Naive thymus-derived CD8-positive, alpha-beta T cell (primary cell): ENCODE measurements at regions of chr13 and their contacts with region 1.

Region 1: GRCh38 chr13:51452361-51453206 is at the start of gene INTS6:
- DNase-seq: peak; percentile 97 to 100 (median 99)
- ATAC-seq: peak; percentile 76 to 84
- H3K4me3 Mint-ChIP-seq: peak within 1 kb of the TSS; percentile 84 to 99 (median 94)
- H3K27ac Mint-ChIP-seq: peak within 1 kb of the TSS; percentile 95 to 100 (median 98)
- H3K4me1 Mint-ChIP-seq: peaks cover 22 to 56% (median 54%) of the 10 kb centered on the region in 4 donors
- H3K27me3 Mint-ChIP-seq: peaks cover 0 to 2% (median 0%) of the 10 kb centered on the region in 5 donors
- polyA plus RNA-seq, gene INTS6: 20.9 to 25.1 (median 23.9) TPM

Region 2: GRCh38 chr13:51420681-51421490 is 31.7 kb before region 1 on chr13:
- POLR2A ChIA-PET with region 1: interaction called, 11 read pairs
- DNase-seq: peak in 2 of 10 donors; percentile 22 to 24
- ATAC-seq: peak; percentile 57 to 71
- H3K4me3 Mint-ChIP-seq: peak overlapping the region; percentile 30 to 74 (median 67)
- H3K27ac Mint-ChIP-seq: peak overlapping the region in 9 of 10 donors; percentile 13 to 90 (median 56)
- H3K4me1 Mint-ChIP-seq: peaks cover 32 to 87% (median 71%) of the 10 kb centered on the region in 4 donors
- H3K27me3 Mint-ChIP-seq: no peaks in the 10 kb centered on the region

Region 3: DNA sequence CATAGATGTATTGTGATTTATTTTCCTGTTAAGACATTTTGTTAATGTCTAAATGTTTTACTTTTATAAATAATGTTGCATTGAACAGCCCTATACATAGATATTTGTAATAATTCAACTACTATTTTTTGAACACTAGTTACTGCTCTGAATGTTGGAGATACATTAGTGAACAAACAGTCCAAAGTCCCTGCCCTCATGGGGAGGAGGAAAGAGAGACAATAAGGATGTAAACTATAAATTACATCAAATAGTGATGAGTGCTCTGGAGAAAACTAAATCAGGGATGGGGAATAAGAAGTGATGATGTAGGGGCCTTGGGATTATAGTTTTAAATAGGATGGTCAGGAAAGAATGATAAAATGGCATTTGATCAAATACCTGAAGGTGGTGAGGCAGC is 12.5 kb after region 1 on chr13:
- POLR2A ChIA-PET with region 1: interaction called, 16 read pairs
- DNase-seq: no peak
- ATAC-seq: no peak
- H3K4me3 Mint-ChIP-seq: no peak overlapping the region
- H3K27ac Mint-ChIP-seq: peak overlapping the region in 1 of 10 donors; percentile 3
- H3K4me1 Mint-ChIP-seq: peaks cover 0 to 2% (median 0%) of the 10 kb centered on the region in 4 donors
- H3K27me3 Mint-ChIP-seq: peaks cover 0 to 2% (median 0%) of the 10 kb centered on the region in 5 donors

Region 4: DNA sequence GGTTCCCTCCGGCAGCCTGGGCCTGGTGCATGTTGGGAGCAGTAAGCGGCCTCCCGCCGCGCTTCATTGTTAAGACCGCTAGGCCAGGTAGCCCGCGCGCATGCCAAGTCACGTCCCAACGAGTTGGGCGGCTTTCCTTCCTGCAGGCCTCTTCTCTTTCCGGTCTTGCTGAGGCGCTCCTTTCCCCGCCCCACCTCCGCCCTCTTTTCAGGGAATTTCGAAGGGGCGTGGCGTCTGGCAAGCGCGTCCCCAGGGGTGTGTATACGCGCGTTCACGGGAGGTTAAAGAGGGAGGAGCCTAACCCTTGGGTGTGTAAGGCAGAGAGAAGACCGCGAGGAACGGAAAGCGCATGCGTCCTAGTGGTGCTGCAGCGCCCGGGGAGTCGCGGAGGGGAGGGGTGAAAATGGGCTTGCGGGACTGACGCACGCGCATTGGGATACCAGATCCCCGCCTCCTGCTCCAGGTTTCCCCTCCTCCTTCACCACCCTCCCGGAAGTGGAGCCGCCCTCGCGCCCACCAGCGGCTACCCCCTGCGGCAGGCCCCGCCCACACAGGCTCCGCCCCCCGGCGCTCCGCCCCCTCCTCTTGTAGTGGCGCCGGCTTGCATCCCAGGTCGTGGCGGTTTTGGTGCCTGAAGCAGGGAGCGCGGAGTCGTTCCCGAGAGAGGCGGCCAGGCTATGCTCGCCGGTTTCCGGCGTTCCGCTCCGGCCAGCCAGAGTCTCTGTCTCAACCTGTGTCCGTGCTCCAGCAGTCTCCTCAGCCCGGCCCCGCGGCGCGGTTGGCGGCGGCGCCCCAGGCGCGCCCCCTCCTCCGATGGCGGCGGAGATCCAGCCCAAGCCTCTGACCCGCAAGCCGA is 131.5 kb after region 1 on chr13 and contains the start of gene WDFY2:
- POLR2A ChIA-PET with region 1: interaction called, 107 read pairs
- DNase-seq: peak; percentile 98 to 100 (median 99)
- ATAC-seq: peak; percentile 75 to 79
- H3K4me3 Mint-ChIP-seq: peak within 1 kb of the TSS; percentile 92 to 100 (median 98)
- H3K27ac Mint-ChIP-seq: peak within 1 kb of the TSS; percentile 95 to 100 (median 99)
- H3K4me1 Mint-ChIP-seq: peaks cover 14 to 38% (median 30%) of the 10 kb centered on the region in 4 donors
- H3K27me3 Mint-ChIP-seq: no peaks in the 10 kb centered on the region
- polyA plus RNA-seq, gene WDFY2: 3.8 to 4.4 (median 4.0) TPM

Region 5: GRCh38 chr13:51674279-51674678 is 221.7 kb after region 1 on chr13:
- POLR2A ChIA-PET with region 1: no interaction called
- DNase-seq: no peak
- ATAC-seq: no peak
- H3K4me3 Mint-ChIP-seq: no peak overlapping the region
- H3K27ac Mint-ChIP-seq: no peak overlapping the region
- H3K4me1 Mint-ChIP-seq: peaks cover 11 to 27% (median 23%) of the 10 kb centered on the region in 4 donors
- H3K27me3 Mint-ChIP-seq: no peaks in the 10 kb centered on the region

Region 6: DNA sequence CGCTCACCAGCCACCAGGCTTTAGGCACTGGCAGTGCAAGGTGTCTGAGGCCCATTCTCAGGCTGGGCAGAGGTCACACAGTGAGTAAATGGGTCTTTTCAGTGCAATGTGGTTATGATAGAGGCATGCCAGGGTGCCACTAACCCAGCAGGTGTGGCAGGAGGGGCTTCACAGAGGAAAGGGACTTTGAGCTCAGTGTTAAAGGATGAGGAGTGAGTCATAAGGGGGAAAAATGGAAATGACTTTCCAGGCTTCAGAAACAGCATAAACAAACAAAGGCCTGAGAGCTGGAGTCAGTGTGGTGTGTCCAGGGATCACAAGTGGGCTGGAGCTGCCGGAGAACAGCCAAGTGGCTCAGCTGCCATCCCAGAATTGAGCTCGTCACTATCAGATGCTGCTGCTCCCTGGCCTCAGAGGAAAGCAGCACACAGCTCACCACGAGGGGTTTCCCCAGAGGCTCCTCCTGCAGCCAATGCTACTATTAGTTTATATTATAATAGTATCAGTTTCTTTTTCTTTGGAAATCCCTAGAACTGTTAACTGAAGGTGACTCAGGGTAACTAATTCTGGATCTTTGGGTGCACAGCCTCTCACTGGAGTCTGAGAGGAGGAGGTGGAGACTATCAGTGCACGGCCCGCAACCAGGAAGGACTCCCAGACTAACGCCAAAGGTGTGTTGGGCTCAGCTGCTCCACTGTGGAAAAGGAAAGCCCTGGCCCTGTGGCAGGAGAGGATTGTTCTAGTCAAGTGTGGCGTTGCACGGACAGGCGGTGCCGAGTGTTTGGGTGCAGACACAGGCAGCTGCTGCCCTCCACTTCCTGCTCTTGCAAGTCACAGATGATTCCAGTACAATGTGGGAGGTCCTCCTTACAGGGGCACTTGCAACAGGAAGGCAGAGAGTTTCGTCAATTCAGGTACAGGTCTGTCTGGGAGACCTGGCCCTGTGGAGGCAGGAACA is 311.9 kb after region 1 on chr13:
- POLR2A ChIA-PET with region 1: interaction called, 20 read pairs
- DNase-seq: peak in 8 of 10 donors; percentile 22 to 57 (median 40)
- ATAC-seq: peak; percentile 79 to 86
- H3K4me3 Mint-ChIP-seq: peak overlapping the region; percentile 68 to 92 (median 86)
- H3K27ac Mint-ChIP-seq: peak overlapping the region; percentile 91 to 98 (median 96)
- H3K4me1 Mint-ChIP-seq: peaks cover 13 to 31% (median 23%) of the 10 kb centered on the region in 4 donors
- H3K27me3 Mint-ChIP-seq: no peaks in the 10 kb centered on the region

Region 7: DNA sequence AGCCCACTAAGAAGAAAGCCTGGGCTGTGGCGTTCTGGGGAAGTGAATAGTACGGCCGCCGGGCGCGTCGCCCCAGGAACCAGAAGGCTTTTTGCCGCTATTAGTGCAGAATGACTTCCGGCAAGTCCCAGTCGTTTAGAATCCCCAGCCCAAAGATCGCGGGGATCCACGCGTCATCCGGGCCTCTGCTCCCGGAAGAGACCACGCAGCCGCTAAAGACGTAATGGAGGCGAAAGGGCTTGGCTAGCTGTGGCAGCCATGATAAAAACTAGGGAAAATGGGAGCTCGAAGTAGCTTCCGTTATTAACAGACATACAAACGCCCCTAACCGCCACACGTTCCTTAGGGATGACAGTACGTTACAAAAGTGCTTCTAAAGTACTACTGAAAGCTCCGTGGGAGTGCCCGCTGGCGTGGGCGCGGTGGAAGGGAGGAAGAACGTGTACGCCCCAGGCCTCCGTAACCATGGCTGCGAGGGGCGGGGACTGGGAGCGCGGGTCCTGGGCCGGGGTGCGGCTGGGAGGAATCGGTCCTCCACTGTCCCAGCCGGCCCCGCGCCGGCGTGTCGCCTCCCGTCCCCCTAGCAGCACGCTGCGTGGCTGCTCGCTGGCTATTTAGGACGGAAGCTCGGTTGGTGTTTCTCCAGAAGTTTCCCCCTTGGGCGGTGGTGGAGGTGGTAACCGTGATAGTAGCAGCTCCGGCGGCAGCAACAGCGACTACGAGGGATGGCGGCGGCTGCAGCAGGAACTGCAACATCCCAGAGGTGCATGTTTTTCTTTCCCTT is 1199.8 kb after region 1 on chr13 and contains the start of gene SUGT1:
- POLR2A ChIA-PET with region 1: interaction called, 15 read pairs
- DNase-seq: peak; percentile 91 to 98 (median 95)
- ATAC-seq: peak; percentile 93 to 94
- H3K4me3 Mint-ChIP-seq: no peak within 1 kb of the TSS
- H3K27ac Mint-ChIP-seq: no peak within 1 kb of the TSS
- H3K4me1 Mint-ChIP-seq: peaks cover 3 to 11% (median 6%) of the 10 kb centered on the region in 4 donors
- H3K27me3 Mint-ChIP-seq: no peaks in the 10 kb centered on the region
- polyA plus RNA-seq, gene SUGT1: 50.4 to 53.1 (median 51.3) TPM